ENCODE measurements at regions of chr7 and their contacts with region 1.

Region 1: DNA sequence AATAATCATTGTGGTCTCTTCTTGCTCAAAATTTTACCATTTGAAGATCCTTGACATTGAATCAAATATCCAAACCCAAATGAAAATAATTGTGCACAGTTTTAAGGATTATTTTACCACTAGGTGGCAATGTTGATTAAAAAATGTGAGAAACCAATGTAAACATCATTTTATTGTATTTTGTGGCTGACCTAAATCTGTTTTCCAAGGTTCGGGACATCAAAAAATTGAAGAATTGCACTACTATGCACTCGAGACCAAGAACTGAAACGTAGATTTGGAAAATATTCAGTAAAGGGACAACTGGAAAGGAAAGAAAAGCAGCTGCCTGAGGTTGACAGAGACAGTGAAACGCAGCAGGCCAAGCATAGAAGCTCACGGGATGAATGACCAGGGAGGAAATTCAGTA is 259.3 kb downstream of the SNX13 start:
- DNase-seq: no peak
- H3K4me3 ChIP-seq: no peak overlapping the region
- H3K27ac ChIP-seq: no peak overlapping the region
- H3K27me3 ChIP-seq: no peaks in the 10 kb centered on the region
- CTCF ChIP-seq: peak; percentile 40

Region 2: GRCh38 chr7:18320971-18321567 is 640.1 kb after region 1 on chr7:
- CTCF ChIA-PET with region 1: interaction called, 10 read pairs
- POLR2A ChIA-PET with region 1: no interaction called
- DNase-seq: no peak
- H3K4me3 ChIP-seq: no peak overlapping the region
- H3K27ac ChIP-seq: no peak overlapping the region
- H3K27me3 ChIP-seq: no peaks in the 10 kb centered on the region
- CTCF ChIP-seq: peak; percentile 63

Measured in AG04450 (cell line).